Natural killer cell (primary cell): ENCODE measurements at regions of chr5 and their contacts with region 1.

Region 1: DNA sequence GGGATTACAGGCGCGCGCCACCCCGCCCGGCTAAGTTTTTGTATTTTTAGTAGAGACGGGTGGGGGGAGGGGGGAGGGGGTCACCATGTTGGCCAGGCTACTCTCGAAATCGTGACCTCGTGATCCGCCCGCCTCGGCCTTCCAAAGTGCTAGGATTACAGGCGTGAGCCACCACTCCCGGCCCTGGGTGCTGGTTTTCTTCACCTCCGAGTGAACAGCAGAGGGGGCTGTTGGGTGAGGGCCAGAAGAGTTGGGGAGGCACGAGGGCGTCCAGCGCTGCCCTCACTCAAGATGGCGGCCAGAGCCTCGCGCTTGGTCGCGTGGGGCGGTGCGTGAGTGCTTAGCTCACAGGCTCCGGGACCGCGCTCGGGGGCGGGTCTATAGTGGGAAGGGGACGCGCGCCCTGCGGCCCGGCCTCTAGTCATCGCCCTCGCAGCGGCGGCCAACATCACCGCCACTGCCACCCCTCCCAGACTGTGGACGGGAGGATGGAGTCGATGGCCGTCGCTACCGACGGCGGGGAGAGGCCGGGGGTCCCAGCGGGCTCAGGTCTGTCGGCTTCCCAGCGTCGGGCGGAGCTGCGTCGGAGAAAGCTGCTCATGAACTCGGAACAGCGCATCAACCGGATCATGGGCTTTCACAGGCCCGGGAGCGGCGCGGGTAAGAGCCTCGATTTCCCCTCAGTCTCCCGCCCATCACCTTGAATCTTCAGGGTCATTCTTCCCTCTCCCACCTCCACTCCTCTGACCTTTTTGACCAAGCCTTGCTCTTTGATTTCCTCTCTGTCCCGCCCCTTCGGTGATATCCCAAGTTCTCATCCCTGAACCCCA is at the start of gene CAMLG:
- DNase-seq: peak; percentile 97 to 99
- ATAC-seq: peak; percentile 96 to 100 (median 97)
- H3K4me3 ChIP-seq: peak within 1 kb of the TSS; percentile 93
- H3K4me3 Mint-ChIP-seq: peak within 1 kb of the TSS; percentile 98
- H3K27ac ChIP-seq: peak within 1 kb of the TSS; percentile 89
- H3K27ac Mint-ChIP-seq: peak within 1 kb of the TSS; percentile 96 to 97
- H3K4me1 ChIP-seq: peaks cover 18% of the 10 kb centered on the region
- H3K4me1 Mint-ChIP-seq: peaks cover 16 to 27% of the 10 kb centered on the region in 2 donors
- H3K27me3 ChIP-seq: no peaks in the 10 kb centered on the region
- H3K27me3 Mint-ChIP-seq: no peaks in the 10 kb centered on the region
- CTCF ChIP-seq: peak; percentile 75
- total RNA-seq, gene CAMLG: 23.5 to 35.9 (median 34.6) TPM

Region 2: DNA sequence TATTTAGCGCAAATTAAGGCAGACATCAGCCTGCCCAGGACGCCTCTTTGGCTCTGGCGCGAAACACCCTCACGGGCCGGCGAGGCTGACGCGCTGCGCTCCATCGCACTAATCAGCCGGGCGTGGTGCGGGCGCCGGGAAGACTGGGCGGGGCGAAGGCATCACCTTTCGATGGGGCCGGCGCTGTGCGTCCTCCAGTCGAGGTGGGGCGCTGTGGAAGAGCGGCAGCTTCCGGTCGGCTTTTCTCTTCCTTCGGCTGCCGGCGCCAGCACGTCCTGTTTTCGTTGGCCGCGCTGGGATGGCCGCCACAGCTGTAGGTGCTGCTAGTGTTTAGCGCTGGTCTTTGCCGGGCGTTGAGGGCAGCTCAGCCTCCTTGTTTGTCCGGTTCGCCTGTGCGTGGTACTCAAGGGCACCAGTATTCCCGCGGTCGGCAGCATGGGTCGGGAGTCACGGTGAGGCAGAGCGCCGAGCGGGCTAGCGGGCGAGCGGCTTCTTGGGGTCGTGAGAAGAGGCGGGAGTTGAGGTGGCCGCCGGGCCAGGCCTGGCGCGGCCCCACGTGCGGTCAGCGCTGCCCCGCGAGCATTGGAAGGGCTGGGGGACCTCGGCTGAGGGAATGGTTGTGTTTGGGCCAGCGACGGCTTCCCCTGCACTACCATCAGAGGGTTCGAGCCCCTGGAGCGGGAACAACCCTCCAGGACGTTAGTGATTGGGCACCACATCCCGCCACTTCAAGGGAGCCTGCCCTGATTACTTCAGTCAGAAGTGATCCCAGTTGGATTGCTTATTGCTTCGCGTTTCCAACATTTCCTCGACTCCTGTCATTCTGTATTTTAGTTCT is 20.4 kb after region 1 on chr5 and contains the start of gene DDX46:
- intact Hi-C with region 1: loop called (anchors 1 kb)
- DNase-seq: peak; percentile 90 to 96
- ATAC-seq: peak; percentile 97 to 99 (median 99)
- H3K4me3 ChIP-seq: peak within 1 kb of the TSS; percentile 77
- H3K4me3 Mint-ChIP-seq: peak within 1 kb of the TSS; percentile 100
- H3K27ac ChIP-seq: peak within 1 kb of the TSS; percentile 54
- H3K27ac Mint-ChIP-seq: peak within 1 kb of the TSS; percentile 96 to 98
- H3K4me1 ChIP-seq: peaks cover 13% of the 10 kb centered on the region
- H3K4me1 Mint-ChIP-seq: peaks cover 34 to 44% of the 10 kb centered on the region in 2 donors
- H3K27me3 ChIP-seq: no peaks in the 10 kb centered on the region
- H3K27me3 Mint-ChIP-seq: no peaks in the 10 kb centered on the region
- CTCF ChIP-seq: peak; percentile 74
- total RNA-seq, gene DDX46: 61.4 to 74.8 (median 67.2) TPM

Region 3: DNA sequence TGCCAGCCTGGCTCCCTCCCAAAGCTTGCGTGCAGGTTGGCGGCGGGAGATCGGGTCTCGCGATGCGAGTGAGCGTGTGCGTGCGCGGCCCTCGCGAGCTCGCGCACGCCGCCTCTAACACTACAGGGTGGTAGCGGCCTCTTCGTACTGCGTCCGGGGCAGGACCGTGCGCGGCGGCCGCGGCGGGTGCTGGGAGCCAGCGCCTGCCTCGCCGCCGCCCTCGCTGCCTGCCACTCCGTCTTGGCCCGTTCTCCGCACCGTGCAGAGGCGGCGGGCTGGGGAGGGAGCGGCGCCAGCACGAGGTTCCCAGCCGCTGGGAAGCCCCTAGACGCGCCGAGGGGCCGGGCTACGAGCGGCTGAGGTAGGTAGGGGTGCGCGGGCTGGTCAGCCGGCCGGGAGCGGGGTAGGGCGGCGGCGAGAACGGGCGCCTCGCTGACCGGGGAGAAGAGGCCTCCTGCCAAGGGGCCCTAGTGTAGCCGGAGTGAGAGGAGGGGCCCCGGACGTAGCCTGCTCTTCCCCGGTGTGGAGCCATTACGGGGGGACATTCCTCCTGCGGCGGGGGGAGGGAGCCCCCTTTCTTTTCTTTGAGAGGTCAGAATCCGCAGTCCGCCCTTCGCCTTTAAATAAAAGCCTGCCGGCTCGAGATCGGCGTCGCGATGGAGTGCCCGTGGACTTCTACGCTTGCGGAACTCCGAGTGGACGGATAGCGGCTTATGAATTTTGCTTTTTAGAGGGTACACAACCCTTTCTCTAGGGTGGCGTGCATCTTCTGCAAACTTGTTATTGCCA is 107.7 kb after region 1 on chr5 and contains the start of gene C5orf24:
- intact Hi-C with region 1: loop called (anchors 1 kb)
- DNase-seq: peak; percentile 86 to 98
- ATAC-seq: peak; percentile 91 to 98 (median 91)
- H3K4me3 ChIP-seq: peak within 1 kb of the TSS; percentile 87
- H3K4me3 Mint-ChIP-seq: peak within 1 kb of the TSS; percentile 96
- H3K27ac ChIP-seq: peak within 1 kb of the TSS; percentile 97
- H3K27ac Mint-ChIP-seq: peak within 1 kb of the TSS; percentile 94 to 99
- H3K4me1 ChIP-seq: peaks cover 24% of the 10 kb centered on the region
- H3K4me1 Mint-ChIP-seq: peaks cover 21 to 27% of the 10 kb centered on the region in 2 donors
- H3K27me3 ChIP-seq: no peaks in the 10 kb centered on the region
- H3K27me3 Mint-ChIP-seq: no peaks in the 10 kb centered on the region
- CTCF ChIP-seq: no peak
- total RNA-seq, gene C5orf24: 42.7 to 49.8 (median 44.7) TPM